ENCODE measurements at regions of chr6 and their contacts with region 1.

Region 1: DNA sequence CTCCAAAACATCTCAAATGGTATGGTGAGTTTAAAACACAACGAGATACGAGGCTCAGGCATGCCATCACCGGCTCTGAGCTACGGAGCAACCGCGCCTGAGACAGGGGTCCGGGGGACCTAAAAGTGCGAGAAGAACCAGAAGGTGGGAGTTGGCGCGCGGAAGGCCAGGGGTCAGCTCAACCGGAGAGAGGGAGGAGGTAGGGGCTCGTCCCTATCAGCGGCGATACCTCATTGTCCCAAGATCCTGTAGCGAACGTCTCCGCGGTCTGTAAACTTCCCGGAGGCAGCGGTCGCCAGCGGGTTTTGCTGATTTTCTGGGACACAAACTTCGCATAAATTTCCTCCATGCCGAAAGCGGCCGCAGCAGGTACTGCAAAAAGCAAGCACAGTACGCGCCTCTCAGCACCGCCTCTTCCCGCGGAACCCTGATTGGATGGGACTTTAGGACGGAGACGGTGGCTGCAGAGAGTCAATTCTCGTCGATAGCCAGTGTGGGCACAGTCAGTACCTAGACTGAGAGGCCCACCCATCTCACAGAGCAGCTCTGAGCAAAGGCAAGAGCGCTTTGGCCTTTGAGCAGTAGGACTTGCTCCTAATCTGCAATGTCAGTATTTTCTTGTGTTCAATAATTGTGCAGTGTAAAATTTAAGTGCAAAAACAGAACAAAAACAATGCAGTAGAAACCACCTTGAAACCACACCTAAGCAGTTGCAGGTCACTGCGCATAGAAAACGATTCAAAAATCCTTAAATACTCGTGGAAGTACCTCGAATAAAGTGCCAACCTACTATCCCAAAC is at the start of gene NUP43:
- DNase-seq: peak; percentile 95
- ATAC-seq: peak; percentile 73
- H3K4me3 ChIP-seq: peak within 1 kb of the TSS; percentile 78 to 98 (median 92)
- H3K27ac ChIP-seq: peak within 1 kb of the TSS; percentile 84
- H3K4me1 ChIP-seq: peaks cover 33% of the 10 kb centered on the region
- H3K27me3 ChIP-seq: no peaks in the 10 kb centered on the region; a peak in 1 of 5 replicates
- CTCF ChIP-seq: peak; percentile 67
- EP300 ChIP-seq: peak; percentile 57 to 80
- POLR2A ChIP-seq: peak; percentile 80 to 84
- RAD21 ChIP-seq: peak; percentile 61
- total RNA-seq, gene NUP43: 85.1 and 148 TPM in 2 replicates

Region 2: DNA sequence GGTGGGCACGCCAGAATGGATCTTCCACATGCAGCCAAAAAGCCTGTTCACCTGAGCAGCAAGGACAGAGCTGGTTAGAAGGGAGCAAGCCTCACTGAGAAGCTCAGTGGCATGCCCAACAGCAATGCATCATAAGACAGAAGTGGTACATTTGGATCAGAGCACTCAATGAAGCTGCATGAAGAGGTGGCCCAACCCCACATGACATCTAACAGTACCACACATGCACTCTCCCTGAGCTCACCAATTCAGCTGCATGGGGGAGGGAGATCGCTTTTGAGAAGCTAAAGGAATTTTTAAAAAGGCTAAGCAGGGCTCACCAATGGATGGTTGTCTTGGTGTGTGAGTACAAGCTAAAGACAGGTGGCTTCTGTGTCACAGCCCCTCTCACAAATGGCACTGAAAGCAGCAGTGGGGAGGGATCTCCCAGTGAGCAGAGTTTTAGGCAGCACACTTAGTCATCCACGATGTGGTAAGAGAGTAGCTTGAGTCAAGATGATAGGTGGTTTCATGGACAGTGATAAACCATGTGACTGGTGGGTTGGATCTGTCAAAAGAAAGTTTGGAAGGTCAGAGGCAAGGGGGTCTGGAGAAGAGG is 595.4 kb before region 1 on chr6:
- CTCF ChIA-PET with region 1: no interaction called
- POLR2A ChIA-PET with region 1: no interaction called
- in situ Hi-C with region 1: no loop called
- intact Hi-C with region 1: no loop called
- DNase-seq: no peak
- ATAC-seq: no peak
- H3K4me3 ChIP-seq: no peak overlapping the region
- H3K27ac ChIP-seq: no peak overlapping the region
- H3K4me1 ChIP-seq: no peaks in the 10 kb centered on the region
- H3K27me3 ChIP-seq: peaks cover 0 to 16% of the 10 kb centered on the region in 2 experiments; a peak in 2 of 5 replicates
- CTCF ChIP-seq: no peak
- EP300 ChIP-seq: no peak
- POLR2A ChIP-seq: no peak
- RAD21 ChIP-seq: no peak

Region 3: DNA sequence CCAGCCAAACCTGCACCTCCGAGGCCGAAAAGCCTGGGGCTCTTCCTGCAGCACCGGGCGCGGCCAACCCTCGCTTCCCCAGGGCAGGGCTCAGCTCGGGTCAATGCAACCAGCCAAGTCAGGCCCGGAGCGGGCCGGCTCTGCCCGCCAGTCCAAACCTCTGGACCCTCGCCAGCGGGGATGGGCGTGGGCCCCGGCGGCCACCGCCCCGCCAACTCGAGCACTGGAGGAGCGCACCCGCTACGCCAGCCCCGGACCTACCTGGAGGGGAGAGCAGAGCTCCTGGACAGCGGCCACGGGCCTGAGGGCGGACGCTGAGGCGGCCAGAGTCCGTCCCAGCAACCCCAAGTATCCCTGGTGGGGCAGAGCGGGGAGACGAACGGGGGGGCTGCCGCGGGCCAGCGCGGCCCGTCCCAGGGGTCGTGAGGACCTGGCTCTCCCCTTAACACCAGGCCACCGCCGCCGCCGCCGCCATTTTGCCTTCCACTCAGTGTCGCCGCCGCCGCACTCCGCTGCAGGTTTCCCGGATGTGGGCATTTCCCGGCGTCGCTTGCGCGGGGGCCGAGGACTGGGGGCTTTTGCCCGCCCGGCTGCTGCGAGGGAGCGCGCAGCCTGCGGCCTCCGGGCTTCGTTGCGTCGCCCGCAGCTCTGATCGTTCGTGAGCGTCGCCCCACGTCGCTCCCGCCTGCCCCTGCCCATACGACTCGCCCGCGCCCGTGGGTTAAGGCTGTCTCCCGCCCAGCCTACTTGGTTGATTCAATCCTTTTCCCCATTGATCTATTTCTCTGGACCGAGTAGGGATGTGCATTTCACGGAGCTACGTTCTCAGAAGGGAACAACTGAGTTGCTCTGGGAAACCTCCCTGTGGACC is 28.5 kb before region 1 on chr6 and contains the start of gene LATS1:
- CTCF ChIA-PET with region 1: no interaction called
- POLR2A ChIA-PET with region 1: interaction called, 77 read pairs
- in situ Hi-C with region 1: no loop called
- intact Hi-C with region 1: no loop called
- DNase-seq: peak; percentile 81
- ATAC-seq: peak; percentile 94
- H3K4me3 ChIP-seq: peak within 1 kb of the TSS; percentile 79 to 97 (median 96)
- H3K27ac ChIP-seq: peak within 1 kb of the TSS; percentile 97
- H3K4me1 ChIP-seq: peaks cover 23% of the 10 kb centered on the region
- H3K27me3 ChIP-seq: no peaks in the 10 kb centered on the region; a peak in 1 of 5 replicates
- CTCF ChIP-seq: peak; percentile 29; the same call in 1 of the 2 replicates
- EP300 ChIP-seq: peak in 1 of 2 experiments; percentile 51; a peak in 1 of 4 replicates
- POLR2A ChIP-seq: peak; percentile 95 to 99
- RAD21 ChIP-seq: peak; percentile 63
- total RNA-seq, gene LATS1: 12.6 and 16.4 TPM in 2 replicates

Region 4: DNA sequence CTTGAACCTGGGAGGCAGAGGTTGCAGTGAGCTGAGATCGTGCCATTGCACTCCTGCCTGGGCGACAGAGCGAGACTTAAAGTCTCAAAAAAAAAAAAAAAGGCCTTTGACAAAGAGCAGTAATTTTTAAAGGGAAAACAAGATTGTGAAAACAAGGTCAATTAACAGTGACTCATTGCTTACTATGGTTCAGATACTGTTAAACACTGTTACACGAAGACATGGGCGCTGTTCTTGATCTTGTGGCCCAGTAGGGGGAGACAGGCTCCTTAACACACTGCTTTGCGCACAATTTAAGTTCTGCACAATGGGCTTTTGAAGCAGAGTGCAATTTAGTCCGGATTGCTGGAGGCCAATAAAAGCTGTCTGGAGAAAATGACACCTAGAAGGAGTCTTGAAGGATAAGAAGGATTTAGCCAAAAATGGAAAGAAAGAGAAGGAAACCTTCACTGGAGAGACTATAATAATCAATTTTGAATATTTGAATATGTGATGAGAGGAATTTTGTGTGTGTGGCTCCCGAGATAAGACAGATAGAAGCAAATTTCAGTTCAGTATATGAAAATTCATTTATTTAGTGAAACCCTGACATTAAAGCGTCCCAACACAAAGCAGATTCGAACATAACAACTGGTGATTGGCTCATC is 22.5 kb before region 1 on chr6:
- CTCF ChIA-PET with region 1: interaction called, 3 read pairs
- POLR2A ChIA-PET with region 1: interaction called, 77 read pairs
- in situ Hi-C with region 1: no loop called
- intact Hi-C with region 1: loop called (anchors 1 kb)
- DNase-seq: peak; percentile 77
- ATAC-seq: peak; percentile 98
- H3K4me3 ChIP-seq: no peak overlapping the region
- H3K27ac ChIP-seq: no peak overlapping the region
- H3K4me1 ChIP-seq: peaks cover 6% of the 10 kb centered on the region
- H3K27me3 ChIP-seq: no peaks in the 10 kb centered on the region
- CTCF ChIP-seq: peak; percentile 84
- EP300 ChIP-seq: no peak
- POLR2A ChIP-seq: no peak
- RAD21 ChIP-seq: peak; percentile 70

Region 5: GRCh38 chr6:149769676-149770075 is 23.3 kb after region 1 on chr6:
- CTCF ChIA-PET with region 1: no interaction called
- POLR2A ChIA-PET with region 1: interaction called, 18 read pairs
- in situ Hi-C with region 1: no loop called
- intact Hi-C with region 1: no loop called
- DNase-seq: no peak
- ATAC-seq: no peak; the same call in 2 of the 3 replicates
- H3K4me3 ChIP-seq: no peak overlapping the region
- H3K27ac ChIP-seq: no peak overlapping the region
- H3K4me1 ChIP-seq: no peaks in the 10 kb centered on the region
- H3K27me3 ChIP-seq: no peaks in the 10 kb centered on the region
- CTCF ChIP-seq: no peak
- EP300 ChIP-seq: no peak
- POLR2A ChIP-seq: no peak
- RAD21 ChIP-seq: no peak

Region 6: DNA sequence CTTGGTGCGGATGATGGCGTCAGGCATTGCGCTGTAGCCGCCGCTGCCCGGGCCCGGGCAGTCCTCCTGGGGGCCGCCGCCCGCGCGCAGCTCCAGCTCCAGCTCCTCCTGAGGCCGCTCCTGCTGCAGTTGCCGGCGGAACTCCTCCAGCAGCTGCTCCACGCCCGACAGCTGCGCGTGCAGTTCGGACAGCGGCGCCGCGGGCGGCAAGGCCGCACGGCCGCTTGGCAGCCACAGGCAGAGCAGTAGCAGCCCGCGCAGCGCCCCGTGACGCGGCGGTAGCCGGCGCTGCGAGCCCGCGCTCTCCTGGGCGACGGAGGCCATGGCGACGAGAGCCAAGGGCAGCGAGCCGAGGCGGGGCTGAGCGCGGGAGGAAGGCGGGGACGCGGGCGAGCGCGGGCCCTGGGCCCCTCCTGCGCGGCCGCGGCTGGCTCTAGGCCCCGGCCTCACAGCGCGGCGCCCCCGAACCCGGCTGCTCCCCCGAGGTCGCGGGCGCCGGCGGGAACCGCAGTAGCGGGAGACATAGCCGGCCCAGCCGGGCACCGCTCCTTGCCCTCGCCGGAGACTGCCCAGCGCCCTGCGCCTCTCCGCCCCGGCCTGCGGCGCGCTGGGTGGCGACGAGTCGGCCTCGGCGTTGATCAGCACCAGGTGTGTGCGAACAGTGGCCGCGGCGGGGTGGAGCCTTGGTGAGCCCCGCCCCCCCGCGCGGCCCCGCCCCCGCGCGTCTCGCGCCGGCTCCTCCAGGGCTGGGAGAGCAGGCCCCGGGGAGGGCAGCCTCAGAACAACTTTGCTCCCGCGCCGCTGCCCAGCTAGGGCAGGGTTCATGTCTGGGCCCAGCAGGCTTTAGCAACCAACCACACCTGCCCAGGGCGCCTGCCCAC is 117.6 kb after region 1 on chr6 and contains the start of gene LRP11:
- CTCF ChIA-PET with region 1: no interaction called
- POLR2A ChIA-PET with region 1: no interaction called
- in situ Hi-C with region 1: no loop called
- intact Hi-C with region 1: loop called (anchors 5 kb)
- DNase-seq: peak; percentile 82
- ATAC-seq: peak; percentile 73
- H3K4me3 ChIP-seq: peak within 1 kb of the TSS; percentile 66 to 93 (median 83)
- H3K27ac ChIP-seq: peak within 1 kb of the TSS; percentile 87
- H3K4me1 ChIP-seq: peaks cover 63% of the 10 kb centered on the region
- H3K27me3 ChIP-seq: no peaks in the 10 kb centered on the region; a peak in 1 of 5 replicates
- CTCF ChIP-seq: no peak; the same call in 1 of the 2 replicates
- EP300 ChIP-seq: no peak; a peak in 1 of 4 replicates
- POLR2A ChIP-seq: peak in 1 of 2 experiments; percentile 88; a peak in 2 of 4 replicates
- RAD21 ChIP-seq: peak; percentile 62
- total RNA-seq, gene LRP11: 32.1 and 48.9 TPM in 2 replicates